A673 (cell line): ENCODE measurements at regions of chr1 and their contacts with region 1.

Region 1: DNA sequence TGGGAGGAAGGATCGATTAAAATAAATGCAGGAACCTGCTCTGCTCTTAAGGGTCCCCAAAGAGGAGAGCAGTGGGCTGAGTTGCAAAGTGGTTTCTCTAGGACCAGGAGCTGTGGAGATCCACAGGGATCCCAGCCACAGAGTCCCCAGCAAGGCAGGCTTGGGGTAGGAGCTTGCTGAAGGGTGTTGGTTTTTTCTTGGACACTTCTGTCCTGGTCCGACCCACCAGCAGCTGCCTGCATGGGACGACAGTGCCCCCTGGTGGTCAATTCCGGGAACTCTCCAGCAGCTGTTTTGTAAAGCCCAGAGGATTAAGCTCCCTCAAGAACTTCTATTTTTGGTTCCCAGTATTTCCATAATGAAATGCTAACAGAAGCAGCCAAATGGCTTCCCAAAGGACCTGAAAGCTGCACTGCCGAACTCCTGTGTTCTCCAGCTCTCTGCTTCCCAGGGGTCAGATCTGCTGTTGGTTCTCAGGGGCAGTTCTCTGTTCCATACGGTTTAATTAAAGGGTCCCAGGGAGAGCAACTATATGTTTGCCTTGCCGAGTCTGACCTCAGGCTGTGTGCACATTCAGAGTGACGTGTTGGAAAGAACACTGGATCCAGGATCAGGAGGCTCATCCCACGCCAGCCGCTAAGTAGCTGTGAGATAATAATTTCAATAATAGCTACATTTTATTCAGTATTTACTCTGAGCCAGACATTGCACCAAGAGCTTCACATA is 23.2 kb downstream of the NENF start:
- DNase-seq: peak; percentile 86
- H3K4me3 ChIP-seq: no peak overlapping the region
- H3K27ac ChIP-seq: no peak overlapping the region
- H3K4me1 ChIP-seq: no peaks in the 10 kb centered on the region
- H3K27me3 ChIP-seq: no peaks in the 10 kb centered on the region
- CTCF ChIP-seq: peak; percentile 97

Region 2: GRCh38 chr1:211680752-211681327 is 775.1 kb before region 1 on chr1:
- CTCF ChIA-PET with region 1: interaction called, 34 read pairs
- POLR2A ChIA-PET with region 1: no interaction called
- intact Hi-C with region 1: loop called (anchors 1 kb)
- DNase-seq: peak; percentile 92
- H3K4me3 ChIP-seq: no peak overlapping the region
- H3K27ac ChIP-seq: no peak overlapping the region
- H3K4me1 ChIP-seq: peaks cover 5% of the 10 kb centered on the region
- H3K27me3 ChIP-seq: no peaks in the 10 kb centered on the region
- CTCF ChIP-seq: peak; percentile 77

Region 3: DNA sequence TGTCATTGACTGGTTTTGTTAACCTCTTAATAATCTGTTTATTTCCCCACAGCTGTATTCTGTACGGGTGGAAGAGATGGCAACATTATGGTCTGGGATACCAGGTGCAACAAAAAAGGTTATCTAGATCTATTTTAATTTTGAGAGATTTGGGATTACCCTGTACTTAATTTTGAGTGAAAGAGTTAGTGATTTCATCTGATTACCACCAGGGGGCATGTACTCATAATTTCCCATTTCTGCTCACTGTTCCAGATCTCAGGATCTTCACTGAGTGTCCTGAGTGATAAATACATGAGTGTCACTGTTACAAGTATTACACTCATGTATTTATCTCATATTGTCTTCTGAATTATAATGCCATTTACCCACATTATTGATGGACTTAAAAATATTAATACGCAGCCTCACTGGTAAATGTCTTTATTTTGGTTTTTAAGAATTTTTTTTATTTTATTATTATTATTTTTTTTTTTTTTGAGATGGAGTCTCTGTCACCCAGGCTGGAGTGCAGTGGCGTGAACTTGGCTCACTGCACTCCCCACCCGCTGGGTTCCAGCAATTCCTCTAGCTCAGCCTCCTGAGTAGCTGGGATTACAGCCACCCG is 393.0 kb before region 1 on chr1:
- CTCF ChIA-PET with region 1: interaction called, 4 read pairs
- POLR2A ChIA-PET with region 1: no interaction called
- intact Hi-C with region 1: loop called (anchors 2 kb)
- DNase-seq: peak; percentile 70
- H3K4me3 ChIP-seq: no peak overlapping the region
- H3K27ac ChIP-seq: no peak overlapping the region
- H3K4me1 ChIP-seq: no peaks in the 10 kb centered on the region
- H3K27me3 ChIP-seq: no peaks in the 10 kb centered on the region
- CTCF ChIP-seq: peak; percentile 73

Region 4: GRCh38 chr1:212147581-212148033 is 308.4 kb before region 1 on chr1:
- CTCF ChIA-PET with region 1: no interaction called
- POLR2A ChIA-PET with region 1: interaction called, 17 read pairs
- intact Hi-C with region 1: no loop called
- DNase-seq: no peak
- H3K4me3 ChIP-seq: no peak overlapping the region
- H3K27ac ChIP-seq: no peak overlapping the region
- H3K4me1 ChIP-seq: no peaks in the 10 kb centered on the region
- H3K27me3 ChIP-seq: no peaks in the 10 kb centered on the region
- CTCF ChIP-seq: no peak

Region 5: GRCh38 chr1:212586206-212587015 is 130.4 kb after region 1 on chr1:
- CTCF ChIA-PET with region 1: no interaction called
- POLR2A ChIA-PET with region 1: no interaction called
- intact Hi-C with region 1: no loop called
- DNase-seq: no peak
- H3K4me3 ChIP-seq: no peak overlapping the region
- H3K27ac ChIP-seq: no peak overlapping the region
- H3K4me1 ChIP-seq: no peaks in the 10 kb centered on the region
- H3K27me3 ChIP-seq: no peaks in the 10 kb centered on the region
- CTCF ChIP-seq: no peak

Region 6: GRCh38 chr1:212782422-212783154 is 326.6 kb after region 1 on chr1:
- CTCF ChIA-PET with region 1: no interaction called
- POLR2A ChIA-PET with region 1: no interaction called
- intact Hi-C with region 1: loop called (anchors 5 kb)
- DNase-seq: peak; percentile 45
- H3K4me3 ChIP-seq: no peak overlapping the region
- H3K27ac ChIP-seq: no peak overlapping the region
- H3K4me1 ChIP-seq: no peaks in the 10 kb centered on the region
- H3K27me3 ChIP-seq: no peaks in the 10 kb centered on the region
- CTCF ChIP-seq: peak; percentile 68